Heart left ventricle (tissue), 16 donors: ENCODE measurements at regions of chr11 and their contacts with region 1.

Region 1: DNA sequence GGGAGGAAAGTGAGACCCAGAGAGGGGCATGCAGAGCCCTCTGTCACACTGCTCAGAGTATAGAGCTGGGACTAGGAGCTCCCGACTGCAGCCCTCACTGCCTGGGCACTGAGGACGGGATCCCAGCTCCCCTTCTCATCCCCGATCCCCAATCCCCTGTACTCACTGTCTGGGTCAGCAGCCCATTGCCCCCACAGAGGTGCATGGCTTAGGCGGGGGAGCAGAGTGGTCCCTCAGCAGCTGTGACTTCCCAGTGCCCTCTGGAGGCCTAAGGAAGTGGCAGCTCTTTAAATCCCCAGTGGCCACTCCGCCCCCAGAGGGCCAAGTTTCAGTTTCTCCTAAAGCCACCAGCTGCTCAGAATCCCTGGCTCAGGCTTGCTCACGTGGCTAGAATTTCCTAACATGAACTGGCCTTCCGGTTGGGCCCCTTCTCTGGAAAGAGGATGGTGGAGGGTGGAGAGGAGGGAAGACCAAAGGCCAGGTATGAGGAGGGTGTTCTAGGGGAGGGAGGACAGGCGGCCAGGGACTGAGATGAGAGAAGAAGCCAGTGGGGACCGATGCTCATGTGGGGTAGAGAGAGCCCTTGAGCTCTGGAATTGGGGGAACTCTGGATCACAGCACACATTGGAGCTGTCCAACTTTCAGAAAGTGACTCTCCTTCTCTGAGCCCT is at the start of gene BATF2:
- DNase-seq: peak; percentile 77 to 83 (median 80)
- ATAC-seq: peak; percentile 54 to 96 (median 92)
- H3K4me3 ChIP-seq: peak within 1 kb of the TSS in 11 of 12 donors; percentile 15 to 68 (median 51)
- H3K27ac ChIP-seq: peak within 1 kb of the TSS; percentile 3 to 83 (median 72)
- H3K4me1 ChIP-seq: peaks cover 0 to 68% (median 10%) of the 10 kb centered on the region in 12 donors
- H3K27me3 ChIP-seq: no peaks in the 10 kb centered on the region
- CTCF ChIP-seq: peak; percentile 16 to 61 (median 39)
- POLR2A ChIP-seq: peak in 1 of 2 donors; percentile 43
- total RNA-seq, gene BATF2: 0.87 to 33.4 (median 1.5) TPM

Region 2: GRCh38 chr11:64846998-64847666 is 149.7 kb before region 1 on chr11:
- intact Hi-C with region 1: loop called in 4 of 10 experiments (anchors 5 to 10 kb)
- DNase-seq: peak; percentile 90 to 96 (median 91)
- ATAC-seq: peak; percentile 79 to 91 (median 84)
- H3K4me3 ChIP-seq: no peak overlapping the region
- H3K27ac ChIP-seq: peak overlapping the region in 6 of 12 donors; percentile 15 to 89 (median 56)
- H3K4me1 ChIP-seq: peaks cover 7 to 61% (median 52%) of the 10 kb centered on the region in 12 donors
- H3K27me3 ChIP-seq: peaks cover 0 to 4% (median 0%) of the 10 kb centered on the region in 9 donors
- CTCF ChIP-seq: peak; percentile 94 to 99 (median 98)
- POLR2A ChIP-seq: peak in 1 of 2 donors; percentile 18

Region 3: GRCh38 chr11:64916775-64917662 is 79.8 kb before region 1 on chr11 and contains the start of gene ATG2A:
- intact Hi-C with region 1: loop called in 2 of 10 experiments (anchors 5 to 10 kb)
- DNase-seq: peak; percentile 99 to 100 (median 99)
- ATAC-seq: peak; percentile 98 to 99 (median 98)
- H3K4me3 ChIP-seq: peak within 1 kb of the TSS; percentile 67 to 100 (median 97)
- H3K27ac ChIP-seq: peak within 1 kb of the TSS in 11 of 12 donors; percentile 78 to 95 (median 85)
- H3K4me1 ChIP-seq: peaks cover 0 to 42% (median 26%) of the 10 kb centered on the region in 12 donors
- H3K27me3 ChIP-seq: no peaks in the 10 kb centered on the region
- CTCF ChIP-seq: no peak
- POLR2A ChIP-seq: peak; percentile 79 to 96
- total RNA-seq, gene ATG2A: 11.4 to 38.5 (median 18.4) TPM

Region 4: GRCh38 chr11:64924102-64924851 is 72.6 kb before region 1 on chr11 and contains the start of gene PPP2R5B:
- intact Hi-C with region 1: loop called in 4 of 10 experiments (anchors 2 to 10 kb)
- DNase-seq: peak; percentile 96 to 97 (median 96)
- ATAC-seq: peak; percentile 96 to 98 (median 98)
- H3K4me3 ChIP-seq: peak within 1 kb of the TSS; percentile 56 to 100 (median 96)
- H3K27ac ChIP-seq: peak within 1 kb of the TSS; percentile 71 to 99 (median 96)
- H3K4me1 ChIP-seq: peaks cover 0 to 39% (median 25%) of the 10 kb centered on the region in 12 donors
- H3K27me3 ChIP-seq: no peaks in the 10 kb centered on the region
- CTCF ChIP-seq: no peak
- POLR2A ChIP-seq: peak in 1 of 2 donors; percentile 87
- total RNA-seq, gene PPP2R5B: 17.5 to 32.5 (median 22.3) TPM

Region 5: DNA sequence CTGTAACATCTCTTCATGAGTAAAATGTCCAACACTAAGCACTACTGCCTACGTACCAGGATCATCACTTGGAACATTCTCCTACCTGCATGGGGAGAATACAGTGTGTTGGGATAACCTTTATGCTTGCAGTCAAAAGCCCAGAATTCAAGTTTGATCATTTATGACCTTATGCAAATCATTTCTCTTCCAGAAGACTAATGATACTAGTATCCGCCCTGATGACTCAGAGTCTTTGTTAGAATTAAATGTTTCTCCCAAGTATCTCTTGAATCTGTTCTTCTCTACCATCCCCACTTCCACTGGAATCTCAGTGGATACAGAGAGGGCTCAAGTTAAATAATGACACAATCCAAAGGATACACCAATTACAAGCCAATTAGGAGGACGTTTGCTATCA is 37.3 kb before region 1 on chr11:
- intact Hi-C with region 1: loop called in 2 of 10 experiments (anchors 5 kb)
- DNase-seq: no peak
- ATAC-seq: no peak
- H3K4me3 ChIP-seq: no peak overlapping the region
- H3K27ac ChIP-seq: no peak overlapping the region
- H3K4me1 ChIP-seq: no peaks in the 10 kb centered on the region
- H3K27me3 ChIP-seq: peaks cover 0 to 3% (median 0%) of the 10 kb centered on the region in 9 donors
- CTCF ChIP-seq: no peak
- POLR2A ChIP-seq: no peak